A549 (cell line): ENCODE measurements at regions of chr15 and their contacts with region 1.

Region 1: GRCh38 chr15:64681424-64682024 is 93.9 kb downstream of the RBPMS2 start:
- DNase-seq: peak; percentile 86 to 98
- ATAC-seq: peak; percentile 95 to 97
- H3K4me3 ChIP-seq: no peak overlapping the region
- H3K27ac ChIP-seq: peak overlapping the region in 1 of 2 experiments; percentile 9; a peak in 1 of 6 replicates
- H3K4me1 ChIP-seq: peaks cover 4% of the 10 kb centered on the region; the same call in 1 of the 3 replicates
- CTCF ChIP-seq: peak; percentile 99
- EP300 ChIP-seq: no peak
- POLR2A ChIP-seq: no peak
- RAD21 ChIP-seq: peak; percentile 97 to 99

Region 2: GRCh38 chr15:64430000-64430735 is 251.4 kb before region 1 on chr15:
- CTCF ChIA-PET with region 1: interaction called, 90 read pairs
- POLR2A ChIA-PET with region 1: interaction called, 3 read pairs
- DNase-seq: no peak
- ATAC-seq: no peak
- H3K4me3 ChIP-seq: no peak overlapping the region
- H3K27ac ChIP-seq: no peak overlapping the region
- H3K4me1 ChIP-seq: 0 out of 3 replicates have a peak, but pooled peaks cover 6% of the 10 kb centered on the region
- CTCF ChIP-seq: no peak
- EP300 ChIP-seq: no peak
- POLR2A ChIP-seq: no peak
- RAD21 ChIP-seq: no peak

Region 3: DNA sequence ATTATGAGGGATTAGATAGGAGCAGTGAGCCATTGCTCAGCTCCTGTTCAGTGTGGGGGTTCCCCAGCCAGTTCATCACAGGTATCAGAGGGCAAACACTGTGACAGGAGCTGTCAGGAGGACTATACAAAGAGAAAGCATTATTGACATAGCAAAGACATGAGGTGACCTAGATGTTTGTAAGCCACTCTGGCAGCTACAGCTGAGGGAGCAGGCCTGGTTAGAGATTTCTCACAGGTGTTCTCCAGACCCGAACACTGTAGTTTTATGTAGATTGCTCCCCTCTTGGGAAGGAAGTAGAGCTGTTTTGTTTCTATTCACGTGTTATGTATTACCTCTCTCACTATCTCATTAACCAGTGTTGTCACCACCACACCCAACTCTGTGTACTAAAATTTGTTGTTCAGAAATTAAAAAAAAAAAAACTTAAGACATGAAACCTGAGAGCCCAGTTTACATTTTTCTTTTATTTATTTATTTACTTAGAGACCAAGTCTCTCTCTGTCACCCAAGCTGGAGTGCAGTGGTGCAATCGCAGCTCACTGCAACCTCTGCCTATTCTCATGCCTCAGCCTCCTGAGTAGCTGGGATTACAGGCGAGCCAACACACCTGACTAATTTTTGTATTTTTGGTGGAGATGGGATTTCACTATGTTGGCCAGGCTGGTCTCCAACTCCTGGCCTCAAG is 29.8 kb before region 1 on chr15:
- CTCF ChIA-PET with region 1: interaction called, 10 read pairs
- POLR2A ChIA-PET with region 1: no interaction called
- DNase-seq: no peak
- ATAC-seq: peak; percentile 48 to 54; a peak in 3 of 6 replicates
- H3K4me3 ChIP-seq: no peak overlapping the region
- H3K27ac ChIP-seq: no peak overlapping the region
- H3K4me1 ChIP-seq: peaks cover 33% of the 10 kb centered on the region
- CTCF ChIP-seq: no peak
- EP300 ChIP-seq: no peak
- POLR2A ChIP-seq: no peak
- RAD21 ChIP-seq: no peak

Region 4: GRCh38 chr15:64695561-64695992 is 14.1 kb after region 1 on chr15:
- CTCF ChIA-PET with region 1: interaction called, 187 read pairs
- POLR2A ChIA-PET with region 1: interaction called, 3 read pairs
- DNase-seq: no peak
- ATAC-seq: no peak
- H3K4me3 ChIP-seq: no peak overlapping the region
- H3K27ac ChIP-seq: no peak overlapping the region
- H3K4me1 ChIP-seq: peaks cover 49% of the 10 kb centered on the region
- CTCF ChIP-seq: no peak
- EP300 ChIP-seq: no peak
- POLR2A ChIP-seq: no peak
- RAD21 ChIP-seq: no peak